IMR-90 (cell line): ENCODE measurements at regions of chr13 and their contacts with region 1.

Region 1: GRCh38 chr13:79936368-79937136 is 404.4 kb downstream of the SPRY2 start:
- DNase-seq: peak; percentile 100
- ATAC-seq: peak; percentile 92
- H3K4me3 ChIP-seq: no peak overlapping the region
- H3K27ac ChIP-seq: peak overlapping the region; percentile 98
- H3K4me1 ChIP-seq: peaks cover 20% of the 10 kb centered on the region
- H3K27me3 ChIP-seq: no peaks in the 10 kb centered on the region
- CTCF ChIP-seq: no peak
- POLR2A ChIP-seq: peak; percentile 40; the same call in 1 of the 2 replicates
- RAD21 ChIP-seq: peak; percentile 35

Region 2: DNA sequence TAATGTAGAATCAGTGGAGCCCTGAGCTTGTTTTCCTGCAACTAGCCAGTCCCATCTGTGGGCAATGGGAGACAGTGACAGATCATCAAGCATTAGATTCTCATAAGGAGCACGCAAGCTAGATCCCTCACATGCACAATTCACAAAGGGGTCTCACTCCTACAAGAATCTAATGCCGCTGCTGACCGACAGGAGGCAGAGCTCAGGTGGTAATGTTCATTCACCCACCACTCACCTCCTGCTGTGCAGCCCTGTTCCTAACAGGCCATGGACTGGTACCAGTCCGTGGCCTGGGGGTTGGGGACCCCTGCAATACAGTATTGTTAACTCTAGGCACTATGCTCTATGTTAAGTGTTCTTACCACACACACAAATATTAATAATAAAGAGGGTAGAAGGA is 893.3 kb before region 1 on chr13:
- CTCF ChIA-PET with region 1: no interaction called
- POLR2A ChIA-PET with region 1: no interaction called
- dilution Hi-C with region 1: no loop called
- in situ Hi-C with region 1: no loop called
- intact Hi-C with region 1: no loop called
- DNase-seq: no peak
- ATAC-seq: no peak
- H3K4me3 ChIP-seq: no peak overlapping the region
- H3K27ac ChIP-seq: no peak overlapping the region
- H3K4me1 ChIP-seq: no peaks in the 10 kb centered on the region
- H3K27me3 ChIP-seq: no peaks in the 10 kb centered on the region
- CTCF ChIP-seq: no peak
- POLR2A ChIP-seq: no peak
- RAD21 ChIP-seq: no peak

Region 3: DNA sequence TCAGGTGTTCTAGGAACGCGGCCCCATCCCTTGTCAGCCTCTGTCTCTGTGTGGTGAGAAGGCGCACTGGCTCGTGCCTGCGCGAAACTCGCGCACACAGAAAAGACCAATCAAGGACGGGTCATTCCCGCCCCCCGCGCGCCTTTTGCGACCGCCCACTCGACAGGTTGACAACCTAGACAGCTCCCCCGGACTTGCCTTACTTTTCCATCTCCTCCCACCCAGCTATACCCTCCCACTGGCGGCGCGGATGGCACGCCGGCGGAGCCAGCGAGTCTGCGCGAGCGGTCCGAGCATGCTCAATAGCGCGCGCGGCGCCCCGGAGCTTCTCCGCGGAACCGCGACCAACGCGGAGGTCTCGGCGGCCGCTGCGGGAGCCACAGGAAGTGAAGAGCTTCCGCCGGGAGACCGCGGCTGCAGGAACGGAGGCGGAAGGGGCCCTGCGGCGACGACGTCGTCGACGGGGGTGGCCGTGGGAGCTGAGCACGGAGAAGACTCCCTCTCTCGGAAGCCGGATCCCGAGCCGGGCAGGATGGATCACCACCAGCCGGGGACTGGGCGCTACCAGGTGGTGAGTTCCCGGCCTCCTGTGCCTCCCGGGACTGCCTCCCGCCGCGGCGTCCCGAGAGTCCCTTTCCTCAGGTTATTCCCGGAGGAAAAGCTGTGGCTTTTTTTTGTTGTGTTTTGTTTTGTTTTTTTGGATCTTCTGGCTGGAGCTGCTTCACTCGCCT is 455.4 kb before region 1 on chr13 and contains the start of gene NDFIP2:
- CTCF ChIA-PET with region 1: no interaction called
- POLR2A ChIA-PET with region 1: no interaction called
- dilution Hi-C with region 1: no loop called
- in situ Hi-C with region 1: no loop called
- intact Hi-C with region 1: no loop called
- DNase-seq: peak; percentile 80
- ATAC-seq: peak; percentile 90
- H3K4me3 ChIP-seq: peak within 1 kb of the TSS; percentile 68
- H3K27ac ChIP-seq: peak within 1 kb of the TSS; percentile 11
- H3K4me1 ChIP-seq: no peaks in the 10 kb centered on the region
- H3K27me3 ChIP-seq: peaks cover 8% of the 10 kb centered on the region
- CTCF ChIP-seq: no peak
- POLR2A ChIP-seq: peak; percentile 75
- RAD21 ChIP-seq: no peak
- total RNA-seq, gene NDFIP2: 25.8 and 48.9 TPM in 2 replicates

Region 4: DNA sequence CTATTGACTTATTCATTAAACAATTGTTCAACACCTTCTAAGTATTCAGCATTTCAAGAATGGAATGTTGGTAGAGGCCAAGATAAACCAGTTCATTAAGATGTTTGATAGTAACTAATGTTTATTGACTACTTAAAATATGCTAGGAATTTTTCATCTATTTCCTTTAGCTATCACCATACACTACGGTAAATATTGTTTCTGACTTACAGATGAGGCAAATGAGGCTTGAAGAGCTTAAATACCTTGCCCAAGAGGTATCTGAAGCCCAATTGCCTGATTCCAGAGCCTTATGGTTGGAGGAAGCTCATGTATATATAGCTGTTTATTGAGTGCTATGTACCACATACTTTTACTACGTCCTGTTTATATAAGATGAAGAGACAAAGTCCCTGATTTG is 169.4 kb before region 1 on chr13:
- CTCF ChIA-PET with region 1: no interaction called
- POLR2A ChIA-PET with region 1: no interaction called
- dilution Hi-C with region 1: no loop called
- in situ Hi-C with region 1: no loop called
- intact Hi-C with region 1: no loop called
- DNase-seq: no peak
- ATAC-seq: peak; percentile 42; the same call in 1 of the 2 replicates
- H3K4me3 ChIP-seq: no peak overlapping the region
- H3K27ac ChIP-seq: no peak overlapping the region
- H3K4me1 ChIP-seq: peaks cover 2% of the 10 kb centered on the region; the same call in 1 of the 2 replicates
- H3K27me3 ChIP-seq: no peaks in the 10 kb centered on the region
- CTCF ChIP-seq: no peak
- POLR2A ChIP-seq: no peak
- RAD21 ChIP-seq: no peak

Region 5: GRCh38 chr13:79782541-79783205 is 153.9 kb before region 1 on chr13:
- CTCF ChIA-PET with region 1: interaction called, 3 read pairs
- POLR2A ChIA-PET with region 1: no interaction called
- dilution Hi-C with region 1: no loop called
- in situ Hi-C with region 1: loop called (anchors 10 kb)
- intact Hi-C with region 1: no loop called
- DNase-seq: peak; percentile 77
- ATAC-seq: peak; percentile 86
- H3K4me3 ChIP-seq: no peak overlapping the region
- H3K27ac ChIP-seq: peak overlapping the region; percentile 58
- H3K4me1 ChIP-seq: peaks cover 11% of the 10 kb centered on the region
- H3K27me3 ChIP-seq: no peaks in the 10 kb centered on the region
- CTCF ChIP-seq: no peak
- POLR2A ChIP-seq: no peak
- RAD21 ChIP-seq: peak; percentile 10; the same call in 1 of the 2 replicates

Region 6: GRCh38 chr13:80022146-80022545 is 85.6 kb after region 1 on chr13:
- CTCF ChIA-PET with region 1: no interaction called
- POLR2A ChIA-PET with region 1: no interaction called
- dilution Hi-C with region 1: no loop called
- in situ Hi-C with region 1: no loop called
- intact Hi-C with region 1: no loop called
- DNase-seq: no peak
- ATAC-seq: no peak
- H3K4me3 ChIP-seq: no peak overlapping the region
- H3K27ac ChIP-seq: no peak overlapping the region
- H3K4me1 ChIP-seq: peaks cover 4% of the 10 kb centered on the region
- H3K27me3 ChIP-seq: no peaks in the 10 kb centered on the region
- CTCF ChIP-seq: no peak
- POLR2A ChIP-seq: no peak
- RAD21 ChIP-seq: no peak

Region 7: DNA sequence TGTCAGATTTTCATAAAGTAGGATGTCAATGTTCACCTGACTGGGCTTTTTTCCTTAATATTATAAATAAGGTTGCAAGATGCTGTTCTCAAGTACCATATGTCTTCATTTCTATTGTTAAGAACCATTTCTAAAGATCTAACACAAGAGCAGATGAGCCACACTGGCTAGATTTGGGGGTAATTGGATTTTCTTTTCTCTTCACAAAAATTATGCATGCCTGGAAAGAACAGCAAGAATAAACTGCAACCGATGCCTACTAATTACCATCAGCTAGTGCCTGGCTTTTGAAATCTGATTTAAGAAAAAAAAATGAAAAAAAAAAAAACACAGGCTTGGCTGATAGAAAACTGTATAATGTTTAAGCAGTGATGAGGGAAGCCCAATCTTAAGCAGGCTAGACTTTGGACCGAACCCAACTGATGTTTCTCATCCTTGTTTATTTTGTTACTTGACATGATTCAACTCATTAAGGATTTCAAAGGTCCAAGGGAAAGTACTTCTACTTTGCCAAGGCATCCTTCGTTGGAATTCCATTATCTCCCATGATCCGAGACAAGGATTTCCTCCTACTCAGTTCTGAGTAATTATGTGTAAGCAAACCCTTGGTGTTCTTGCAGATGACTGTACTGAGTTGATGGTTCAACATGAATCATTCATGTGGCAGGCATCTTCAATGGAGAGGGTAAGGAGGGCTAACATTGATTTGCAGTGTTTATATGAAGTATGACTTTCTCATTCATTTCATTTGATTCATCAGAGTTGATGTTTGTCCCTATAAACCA is 103.8 kb after region 1 on chr13:
- CTCF ChIA-PET with region 1: no interaction called
- POLR2A ChIA-PET with region 1: no interaction called
- dilution Hi-C with region 1: no loop called
- in situ Hi-C with region 1: no loop called
- intact Hi-C with region 1: loop called (anchors 1 kb)
- DNase-seq: peak; percentile 100
- ATAC-seq: peak; percentile 92
- H3K4me3 ChIP-seq: no peak overlapping the region
- H3K27ac ChIP-seq: no peak overlapping the region
- H3K4me1 ChIP-seq: peaks cover 10% of the 10 kb centered on the region; the same call in 1 of the 2 replicates
- H3K27me3 ChIP-seq: no peaks in the 10 kb centered on the region
- CTCF ChIP-seq: no peak
- POLR2A ChIP-seq: no peak
- RAD21 ChIP-seq: peak; percentile 19

Region 8: GRCh38 chr13:80048802-80049201 is 112.2 kb after region 1 on chr13:
- CTCF ChIA-PET with region 1: no interaction called
- POLR2A ChIA-PET with region 1: no interaction called
- dilution Hi-C with region 1: no loop called
- in situ Hi-C with region 1: no loop called
- intact Hi-C with region 1: loop called (anchors 2 kb)
- DNase-seq: peak; percentile 98
- ATAC-seq: peak; percentile 99
- H3K4me3 ChIP-seq: no peak overlapping the region
- H3K27ac ChIP-seq: no peak overlapping the region
- H3K4me1 ChIP-seq: peaks cover 7% of the 10 kb centered on the region
- H3K27me3 ChIP-seq: no peaks in the 10 kb centered on the region
- CTCF ChIP-seq: no peak
- POLR2A ChIP-seq: no peak
- RAD21 ChIP-seq: peak; percentile 39

Region 9: GRCh38 chr13:80083853-80084676 is 147.5 kb after region 1 on chr13:
- CTCF ChIA-PET with region 1: no interaction called
- POLR2A ChIA-PET with region 1: no interaction called
- dilution Hi-C with region 1: no loop called
- in situ Hi-C with region 1: no loop called
- intact Hi-C with region 1: loop called (anchors 5 kb)
- DNase-seq: peak; percentile 93
- ATAC-seq: peak; percentile 76
- H3K4me3 ChIP-seq: no peak overlapping the region; the same call in 1 of the 2 replicates
- H3K27ac ChIP-seq: peak overlapping the region; percentile 74
- H3K4me1 ChIP-seq: peaks cover 8% of the 10 kb centered on the region
- H3K27me3 ChIP-seq: no peaks in the 10 kb centered on the region
- CTCF ChIP-seq: no peak
- POLR2A ChIP-seq: no peak
- RAD21 ChIP-seq: 0 out of 2 replicates have a peak, but pooled peaks have one; percentile 6

Region 10: DNA sequence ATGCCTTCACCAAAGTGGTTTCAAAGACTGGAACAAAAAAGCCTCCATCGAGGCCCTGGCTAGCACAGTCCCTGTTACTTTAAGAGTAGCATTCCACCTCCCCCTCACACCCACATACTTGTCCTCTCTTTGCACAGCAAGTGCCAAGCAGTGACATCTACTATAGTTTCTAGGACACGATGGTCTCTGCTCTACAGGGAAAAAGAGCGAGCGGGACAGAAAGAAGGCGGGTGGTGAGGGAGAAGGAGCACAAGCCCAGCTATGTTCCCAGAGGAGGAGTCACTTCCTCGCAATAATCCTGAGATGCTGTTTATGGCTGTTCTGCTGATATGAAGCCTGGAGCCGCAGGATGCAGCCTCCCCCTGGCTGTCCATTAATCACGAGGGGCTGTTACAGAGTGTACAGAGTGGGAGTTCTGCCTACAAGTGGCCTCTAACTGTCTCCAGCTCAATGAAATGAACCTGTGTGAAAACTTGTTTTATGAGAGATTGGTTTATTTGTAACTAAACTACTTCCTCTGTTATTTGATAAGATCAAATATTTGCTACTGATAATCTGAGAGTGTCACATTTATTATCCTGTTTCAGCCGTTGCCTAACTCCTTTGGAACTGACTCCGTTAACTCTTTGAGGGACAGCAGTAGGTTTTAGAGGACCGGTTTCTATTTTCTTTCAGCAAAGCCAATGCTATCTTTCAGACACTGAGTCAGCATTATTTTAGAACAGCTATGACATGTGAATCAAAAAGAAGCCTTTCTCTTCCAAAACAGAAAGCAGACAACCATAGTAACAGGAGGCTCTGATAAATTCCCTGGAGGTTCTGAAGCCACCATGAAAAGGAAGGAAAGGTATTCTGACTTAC is 196.4 kb after region 1 on chr13:
- CTCF ChIA-PET with region 1: no interaction called
- POLR2A ChIA-PET with region 1: no interaction called
- dilution Hi-C with region 1: no loop called
- in situ Hi-C with region 1: no loop called
- intact Hi-C with region 1: loop called (anchors 5 kb)
- DNase-seq: peak; percentile 62
- ATAC-seq: peak; percentile 88
- H3K4me3 ChIP-seq: peak overlapping the region; percentile 26
- H3K27ac ChIP-seq: peak overlapping the region; percentile 13
- H3K4me1 ChIP-seq: peaks cover 3% of the 10 kb centered on the region; the same call in 1 of the 2 replicates
- H3K27me3 ChIP-seq: no peaks in the 10 kb centered on the region
- CTCF ChIP-seq: no peak
- POLR2A ChIP-seq: no peak
- RAD21 ChIP-seq: no peak

Region 11: GRCh38 chr13:80214521-80214991 is 278.0 kb after region 1 on chr13:
- CTCF ChIA-PET with region 1: no interaction called
- POLR2A ChIA-PET with region 1: no interaction called
- dilution Hi-C with region 1: no loop called
- in situ Hi-C with region 1: no loop called
- intact Hi-C with region 1: loop called (anchors 1 kb)
- DNase-seq: peak; percentile 59
- ATAC-seq: no peak
- H3K4me3 ChIP-seq: no peak overlapping the region
- H3K27ac ChIP-seq: no peak overlapping the region
- H3K4me1 ChIP-seq: peaks cover 9% of the 10 kb centered on the region
- H3K27me3 ChIP-seq: no peaks in the 10 kb centered on the region
- CTCF ChIP-seq: no peak
- POLR2A ChIP-seq: no peak
- RAD21 ChIP-seq: no peak